Activated naive CD4-positive, alpha-beta T cell treated with anti-CD3 and anti-CD28 coated beads for 36 hours (primary cell): ENCODE measurements at regions of chr13 and their contacts with region 1.

Region 1: GRCh38 chr13:46224866-46225265 is 13.1 kb downstream of the LRRC63 start:
- DNase-seq: no peak
- H3K4me3 Mint-ChIP-seq: no peak overlapping the region
- H3K27ac Mint-ChIP-seq: no peak overlapping the region
- H3K4me1 Mint-ChIP-seq: peaks cover 12% of the 10 kb centered on the region
- H3K27me3 Mint-ChIP-seq: no peaks in the 10 kb centered on the region

Region 2: GRCh38 chr13:44713788-44714469 is 1510.9 kb before region 1 on chr13:
- CTCF ChIA-PET with region 1: no interaction called
- intact Hi-C with region 1: no loop called
- DNase-seq: no peak
- H3K4me3 Mint-ChIP-seq: no peak overlapping the region
- H3K27ac Mint-ChIP-seq: no peak overlapping the region
- H3K4me1 Mint-ChIP-seq: peaks cover 11% of the 10 kb centered on the region
- H3K27me3 Mint-ChIP-seq: peaks cover under 1% of the 10 kb centered on the region

Region 3: DNA sequence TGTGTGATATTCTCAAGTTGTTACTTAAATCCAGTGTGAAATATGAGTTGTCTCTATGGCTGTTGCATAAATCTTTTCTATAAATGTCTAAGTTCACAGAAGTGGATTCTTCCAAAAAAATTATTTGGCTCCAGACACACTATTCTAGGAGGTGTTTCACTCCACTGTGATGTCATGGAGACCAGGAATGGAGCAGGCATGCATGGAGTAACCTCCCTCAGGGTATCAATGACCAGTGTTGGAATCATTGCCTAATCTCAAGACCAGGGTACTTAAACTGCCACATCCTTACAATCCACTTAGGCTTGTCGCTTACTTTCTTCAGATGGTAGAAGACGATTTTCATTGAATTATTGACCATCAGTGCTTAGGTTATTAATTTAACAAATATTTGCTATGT is 42.3 kb after region 1 on chr13:
- CTCF ChIA-PET with region 1: no interaction called
- intact Hi-C with region 1: loop called (anchors 5 kb)
- DNase-seq: no peak
- H3K4me3 Mint-ChIP-seq: no peak overlapping the region
- H3K27ac Mint-ChIP-seq: no peak overlapping the region
- H3K4me1 Mint-ChIP-seq: no peaks in the 10 kb centered on the region
- H3K27me3 Mint-ChIP-seq: peaks cover 1% of the 10 kb centered on the region